AG04449 (cell line): ENCODE measurements at regions of chr17 and their contacts with region 1.

Region 1: DNA sequence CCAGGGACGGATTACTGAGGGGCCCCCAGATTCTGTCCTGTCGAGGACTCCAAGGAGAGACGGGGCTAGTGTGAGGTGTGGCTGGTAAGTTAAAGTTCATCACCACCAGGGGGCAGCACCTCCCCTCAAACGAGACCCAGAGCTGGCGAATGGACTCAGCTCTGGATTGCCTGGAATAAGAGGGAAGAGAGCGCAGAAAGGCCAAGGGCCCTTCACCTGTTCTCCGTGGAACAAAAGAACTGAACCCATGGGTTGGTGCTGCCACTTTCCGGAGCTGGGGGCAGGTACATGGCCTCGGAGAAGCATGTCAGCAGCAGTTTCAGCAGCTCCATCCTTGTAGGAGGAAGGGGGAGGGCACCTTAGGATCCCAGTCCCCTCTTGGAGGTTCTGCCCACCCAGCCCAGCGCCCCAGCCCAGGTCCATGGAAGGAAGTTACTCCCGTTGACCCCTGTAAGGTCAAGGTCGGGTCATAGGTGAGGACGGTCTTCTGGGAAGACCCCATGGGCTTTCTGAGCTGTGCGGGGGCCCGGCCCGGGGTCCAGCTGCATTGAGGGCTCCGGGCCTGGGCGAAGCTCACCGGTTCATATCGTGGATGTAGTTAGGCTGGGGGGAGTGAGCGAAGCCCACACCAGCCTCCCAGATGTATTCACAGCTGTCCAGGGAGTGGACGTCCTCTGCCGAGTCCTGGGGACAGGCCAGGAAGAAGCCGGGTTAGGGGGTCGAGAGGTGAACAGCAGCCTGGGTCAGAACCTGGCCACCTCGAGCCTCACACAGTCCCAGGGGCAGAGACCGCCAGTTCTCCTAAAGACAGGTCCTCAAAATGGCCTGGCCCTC is 10.7 kb downstream of the HID1 start:
- DNase-seq: peak; percentile 10
- H3K4me3 ChIP-seq: no peak overlapping the region
- CTCF ChIP-seq: peak; percentile 76

Region 2: DNA sequence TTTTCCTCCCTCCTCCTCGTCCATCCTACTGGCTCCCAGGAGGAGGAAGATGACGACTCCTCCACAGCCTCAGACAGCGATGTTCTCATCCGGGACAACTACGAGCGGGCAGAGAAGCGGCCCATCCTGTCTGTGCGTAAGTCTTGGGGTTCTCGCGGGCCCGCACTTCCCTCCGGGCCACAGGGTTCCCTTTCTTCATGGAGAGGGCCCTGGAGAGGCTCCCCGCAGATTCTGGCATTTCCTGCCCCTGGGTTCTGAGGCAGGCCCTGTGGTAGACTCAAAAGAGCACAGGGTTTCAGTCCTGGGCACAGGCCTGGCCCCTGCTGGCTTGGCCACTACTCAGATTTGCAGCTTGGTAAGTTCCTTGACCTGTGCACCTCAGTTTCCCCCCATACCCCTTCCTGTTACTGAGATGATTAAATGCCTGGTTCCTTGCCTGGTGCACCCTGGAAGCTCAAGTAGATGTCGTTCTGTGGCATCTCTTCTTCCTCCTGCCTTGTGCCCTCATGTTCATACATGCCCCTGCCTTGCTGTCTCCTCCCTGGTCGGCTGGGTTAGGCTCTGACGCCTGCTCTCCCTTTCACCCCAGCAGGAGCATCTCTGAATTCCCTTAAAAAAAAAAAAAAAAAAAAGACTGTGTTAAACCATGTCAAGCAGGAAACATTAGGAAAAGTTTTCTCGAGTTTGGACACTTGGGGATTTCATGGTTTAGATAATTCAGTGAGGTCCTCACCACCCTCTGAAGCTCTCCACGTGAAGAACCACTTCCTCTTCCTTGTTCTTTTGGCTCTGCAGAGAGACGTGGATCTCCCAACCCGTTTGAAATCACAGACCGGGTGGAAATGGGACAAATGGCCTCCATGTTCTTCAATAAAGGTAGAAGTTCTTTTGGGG is 171.5 kb before region 1 on chr17:
- CTCF ChIA-PET with region 1: interaction called, 102 read pairs
- POLR2A ChIA-PET with region 1: no interaction called
- DNase-seq: no peak
- H3K4me3 ChIP-seq: no peak overlapping the region
- CTCF ChIP-seq: no peak

Region 3: GRCh38 chr17:74851612-74852236 is 110.2 kb before region 1 on chr17:
- CTCF ChIA-PET with region 1: no interaction called
- POLR2A ChIA-PET with region 1: no interaction called
- DNase-seq: no peak
- H3K4me3 ChIP-seq: no peak overlapping the region
- CTCF ChIP-seq: no peak

Region 4: DNA sequence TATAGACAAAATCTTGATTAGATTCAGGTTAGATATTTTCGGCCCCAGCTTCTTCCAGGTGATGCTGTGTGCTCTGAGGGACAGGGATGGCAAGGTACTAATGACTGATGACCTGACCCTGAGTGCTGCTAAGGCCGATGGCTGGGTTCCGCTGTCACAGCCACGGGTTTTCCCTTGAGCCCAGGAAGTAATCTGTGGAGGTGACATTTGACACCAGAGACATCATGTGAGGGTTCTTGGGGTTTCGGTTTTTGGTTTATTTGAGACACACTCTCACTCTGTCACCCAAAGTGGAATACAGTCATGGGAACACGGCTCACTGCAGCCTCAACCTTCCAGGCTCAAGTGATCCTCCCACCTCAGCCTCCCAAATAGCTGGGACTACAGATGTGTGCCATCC is 16.3 kb before region 1 on chr17:
- CTCF ChIA-PET with region 1: interaction called, 61 read pairs
- POLR2A ChIA-PET with region 1: no interaction called
- DNase-seq: no peak
- H3K4me3 ChIP-seq: no peak overlapping the region
- CTCF ChIP-seq: no peak

Region 5: DNA sequence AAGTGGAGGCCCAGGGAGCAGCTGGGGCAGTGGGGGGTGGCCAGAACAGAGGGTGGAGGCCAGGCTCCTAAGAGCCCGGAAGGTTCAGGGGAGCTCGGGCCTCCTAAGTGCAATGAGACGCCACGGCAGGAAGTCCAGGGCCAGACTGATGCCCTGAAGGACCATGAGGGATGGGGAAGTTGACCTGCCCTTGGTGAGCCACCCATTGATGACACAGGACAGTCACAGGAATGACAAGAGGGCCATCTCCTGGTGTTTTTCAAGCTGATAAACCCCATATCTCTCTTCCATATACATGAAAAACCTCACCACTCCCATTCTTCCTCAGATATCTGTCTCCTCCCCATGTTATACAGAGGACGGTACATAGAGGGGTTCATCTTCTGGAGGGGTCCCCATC is 44.8 kb after region 1 on chr17:
- CTCF ChIA-PET with region 1: interaction called, 74 read pairs
- POLR2A ChIA-PET with region 1: interaction called, 8 read pairs
- DNase-seq: no peak
- H3K4me3 ChIP-seq: no peak overlapping the region
- CTCF ChIP-seq: no peak

Region 6: DNA sequence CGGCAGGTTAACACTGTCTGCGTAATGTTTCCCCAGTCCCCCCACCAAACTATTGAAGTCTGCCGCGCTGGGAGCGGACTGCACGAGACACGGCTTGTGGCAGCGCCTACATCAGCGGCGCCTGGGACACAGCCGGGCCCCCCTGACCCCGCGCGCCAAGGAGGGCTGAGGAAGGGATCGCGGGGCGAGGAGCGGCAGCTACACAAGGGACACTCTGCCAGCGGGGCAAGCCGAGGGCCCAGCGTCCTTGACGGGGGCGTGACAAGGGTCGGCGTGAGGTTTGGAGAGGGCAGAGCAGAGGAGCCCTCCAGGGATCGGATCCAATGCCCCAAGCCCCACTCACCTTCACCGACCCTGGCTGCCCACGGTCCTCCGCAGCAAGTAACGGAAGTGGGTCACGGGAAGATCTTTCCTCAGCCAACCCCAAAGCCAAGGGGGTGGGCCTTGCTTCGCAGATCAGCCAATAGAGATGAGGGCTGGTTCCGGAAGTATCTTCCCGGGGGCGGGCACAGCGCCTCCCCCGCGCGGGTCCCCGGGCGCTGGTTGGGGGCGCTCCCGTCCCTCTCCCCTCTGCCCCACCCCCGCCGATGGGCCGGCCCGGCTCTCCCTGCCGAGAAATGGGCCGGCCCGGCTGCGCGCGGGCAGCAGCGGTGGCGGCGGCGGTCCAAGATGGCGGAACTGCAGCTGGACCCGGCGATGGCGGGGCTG is 84.9 kb after region 1 on chr17 and contains the starts of genes ATP5PD and KCTD2:
- CTCF ChIA-PET with region 1: interaction called, 18 read pairs
- POLR2A ChIA-PET with region 1: no interaction called
- DNase-seq: peak; percentile 77
- H3K4me3 ChIP-seq: peak within 1 kb of the TSS; percentile 99
- CTCF ChIP-seq: no peak

Region 7: DNA sequence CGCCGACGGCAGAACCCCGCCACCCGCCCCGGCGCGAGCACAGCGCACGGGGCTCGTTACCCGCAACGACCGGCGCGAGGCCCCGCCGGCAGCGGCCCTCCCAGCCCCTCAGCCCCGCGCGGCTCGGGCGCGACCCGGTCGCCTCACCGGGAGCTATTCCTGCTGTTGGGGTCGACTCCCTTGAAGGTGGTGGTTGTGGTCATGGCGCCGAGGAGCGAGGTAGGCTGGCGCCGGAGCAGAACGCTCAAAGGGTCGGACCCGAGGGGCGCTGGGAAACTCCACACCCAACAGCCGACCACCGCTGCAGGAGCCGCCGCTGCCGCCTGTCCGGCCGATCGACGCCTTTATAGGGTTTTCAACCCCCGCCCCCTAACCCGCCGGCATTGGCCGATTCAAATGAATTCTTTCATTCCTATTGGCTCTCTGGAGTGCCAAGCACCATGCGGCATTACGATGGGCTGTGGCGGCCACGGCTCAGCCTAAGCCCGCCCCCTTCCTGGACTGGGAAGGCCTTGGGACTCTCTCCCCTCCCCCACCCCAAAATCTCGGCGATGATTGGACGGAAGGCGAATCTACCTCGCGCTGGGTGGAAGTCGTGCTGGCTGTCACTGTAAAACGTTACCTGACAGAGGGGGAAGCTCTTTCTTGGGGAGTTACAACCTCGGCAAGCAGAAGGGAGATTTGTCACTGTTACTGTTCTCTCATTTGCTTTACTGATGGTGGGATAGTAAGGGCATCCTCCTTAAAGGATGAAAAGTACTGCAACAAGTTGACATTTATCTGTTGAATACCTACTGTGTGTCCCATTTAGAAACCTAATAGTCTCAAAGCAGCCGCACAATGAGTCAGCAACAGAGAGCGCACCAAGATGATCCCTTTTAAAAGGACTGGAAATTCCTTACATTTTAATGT is 192.6 kb after region 1 on chr17 and contains the start of gene JPT1:
- CTCF ChIA-PET with region 1: no interaction called
- POLR2A ChIA-PET with region 1: no interaction called
- DNase-seq: peak; percentile 88
- H3K4me3 ChIP-seq: peak within 1 kb of the TSS; percentile 91
- CTCF ChIP-seq: no peak

Region 8: GRCh38 chr17:75205037-75205792 is 243.3 kb after region 1 on chr17 and contains the start of gene NUP85:
- CTCF ChIA-PET with region 1: interaction called, 108 read pairs
- POLR2A ChIA-PET with region 1: no interaction called
- DNase-seq: peak; percentile 31
- H3K4me3 ChIP-seq: peak within 1 kb of the TSS; percentile 100
- CTCF ChIP-seq: no peak